Left colon (tissue), 2 donors: ENCODE measurements at regions of chr5 and their contacts with region 1.

Region 1: GRCh38 chr5:178279725-178280438 is 47.3 kb upstream of the PHYKPL start:
- DNase-seq: peak; percentile 73 to 93
- ATAC-seq: peak; percentile 98

Region 2: GRCh38 chr5:178551059-178551458 is 271.2 kb after region 1 on chr5:
- intact Hi-C with region 1: loop called (anchors 5 kb)
- DNase-seq: no peak
- ATAC-seq: no peak

Region 3: DNA sequence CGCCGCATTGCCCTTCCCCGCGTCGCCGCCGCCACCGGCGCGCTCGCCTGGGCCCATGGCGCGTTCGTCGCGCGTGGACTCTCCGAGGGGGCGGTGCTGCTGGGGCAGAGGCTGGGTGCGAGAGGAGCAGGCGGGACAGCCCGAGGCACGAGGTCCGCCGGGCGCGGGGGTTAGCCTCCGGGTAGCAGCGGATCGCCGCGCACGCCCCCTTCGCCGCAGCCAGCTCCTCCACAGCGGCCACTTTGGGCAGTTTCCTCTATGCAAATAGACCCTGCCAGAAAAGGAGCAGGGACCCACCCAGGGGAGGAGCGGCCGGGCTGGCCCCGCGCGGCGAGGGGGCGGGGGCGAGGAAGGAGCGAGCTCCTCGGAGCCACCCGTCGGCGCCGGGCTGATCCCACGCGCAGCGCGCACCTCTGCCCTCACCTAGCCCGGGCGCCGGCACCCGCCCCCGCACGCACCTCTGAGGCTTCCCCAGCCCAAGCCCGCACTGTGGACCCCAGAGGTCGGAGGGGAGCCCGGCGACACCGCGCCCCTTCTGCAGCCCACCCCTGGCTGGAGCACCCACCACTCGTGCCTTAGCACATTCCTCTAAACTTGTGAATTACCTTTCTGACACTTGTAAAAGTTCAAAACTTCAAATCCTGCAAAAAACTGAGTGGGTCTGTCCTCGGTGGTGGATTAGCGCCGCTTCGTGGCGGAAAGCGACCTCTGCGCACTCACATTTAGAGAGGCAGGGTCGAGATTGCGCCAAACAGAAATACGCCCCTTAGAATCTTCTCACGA is 310.4 kb after region 1 on chr5 and contains the start of gene COL23A1:
- intact Hi-C with region 1: loop called in 1 of 2 experiments (anchors 5 kb)
- DNase-seq: peak; percentile 34 to 42
- ATAC-seq: peak; percentile 54
- total RNA-seq, gene COL23A1: 0.09 to 0.73 TPM